Activated CD4-positive, alpha-beta memory T cell treated with anti-CD3 and anti-CD28 coated beads for 36 hours (primary cell): ENCODE measurements at regions of chr11 and their contacts with region 1.

Region 1: GRCh38 chr11:107689317-107690202 is 22.3 kb downstream of the SLN start:
- DNase-seq: peak; percentile 69
- H3K4me3 Mint-ChIP-seq: no peak overlapping the region
- H3K27ac Mint-ChIP-seq: no peak overlapping the region
- H3K4me1 Mint-ChIP-seq: no peaks in the 10 kb centered on the region
- H3K27me3 Mint-ChIP-seq: peaks cover 14% of the 10 kb centered on the region

Region 2: DNA sequence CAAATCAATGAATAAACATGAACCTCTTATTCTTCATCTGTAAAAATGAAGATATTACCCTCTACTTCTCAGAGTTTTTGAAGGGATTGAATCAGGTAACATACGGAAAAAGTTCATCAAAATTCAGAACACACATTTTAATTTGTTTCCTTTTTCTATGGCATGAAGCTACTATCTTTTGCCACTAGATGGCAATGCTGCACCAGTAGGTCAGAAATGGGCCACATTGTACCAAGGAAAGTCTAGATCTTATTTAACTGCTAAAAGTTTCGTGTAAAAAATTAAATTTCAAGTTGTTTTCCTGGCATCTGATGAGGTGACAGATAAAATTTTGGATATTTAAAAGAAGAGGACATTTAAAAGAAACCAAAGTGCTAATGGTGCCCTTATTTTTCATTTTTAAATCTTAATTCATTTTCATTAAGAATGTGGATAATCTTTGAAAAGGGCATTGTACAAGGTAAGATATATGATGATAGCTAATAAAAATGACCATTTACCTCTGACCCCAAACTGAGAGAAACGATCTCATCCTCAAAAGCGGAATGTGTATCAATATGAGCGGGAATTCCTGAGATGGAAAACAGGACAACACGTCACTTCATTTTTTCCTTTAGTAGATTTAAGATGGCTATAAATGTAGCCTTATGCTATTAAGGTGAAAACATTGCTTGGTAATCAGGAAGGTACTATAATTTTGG is 140.2 kb before region 1 on chr11:
- CTCF ChIA-PET with region 1: interaction called, 88 read pairs
- POLR2A ChIA-PET with region 1: interaction called, 3 read pairs
- intact Hi-C with region 1: loop called (anchors 1 kb)
- DNase-seq: peak; percentile 40
- H3K4me3 Mint-ChIP-seq: no peak overlapping the region
- H3K27ac Mint-ChIP-seq: no peak overlapping the region
- H3K4me1 Mint-ChIP-seq: peaks cover 10% of the 10 kb centered on the region
- H3K27me3 Mint-ChIP-seq: no peaks in the 10 kb centered on the region

Region 3: GRCh38 chr11:107573438-107573837 is 116.1 kb before region 1 on chr11:
- CTCF ChIA-PET with region 1: interaction called, 52 read pairs
- POLR2A ChIA-PET with region 1: no interaction called
- intact Hi-C with region 1: loop called (anchors 1 kb)
- DNase-seq: no peak
- H3K4me3 Mint-ChIP-seq: no peak overlapping the region
- H3K27ac Mint-ChIP-seq: no peak overlapping the region
- H3K4me1 Mint-ChIP-seq: peaks cover 4% of the 10 kb centered on the region
- H3K27me3 Mint-ChIP-seq: peaks cover 1% of the 10 kb centered on the region

Region 4: GRCh38 chr11:107590460-107591377 is 98.8 kb before region 1 on chr11 and contains the start of gene ELMOD1:
- CTCF ChIA-PET with region 1: interaction called, 11 read pairs
- POLR2A ChIA-PET with region 1: no interaction called
- intact Hi-C with region 1: no loop called
- DNase-seq: peak; percentile 59
- H3K4me3 Mint-ChIP-seq: peak within 1 kb of the TSS; percentile 76
- H3K27ac Mint-ChIP-seq: no peak within 1 kb of the TSS
- H3K4me1 Mint-ChIP-seq: peaks cover 26% of the 10 kb centered on the region
- H3K27me3 Mint-ChIP-seq: peaks cover 77% of the 10 kb centered on the region
- total RNA-seq, gene ELMOD1: 0.12 TPM in 1 of 2 experiments, not detected in the other